Endothelial cell of umbilical vein (primary cell): ENCODE measurements at regions of chr3 and their contacts with region 1.

Region 1: GRCh38 chr3:72818092-72818773 is 30.0 kb downstream of the SHQ1 start:
- DNase-seq: peak; percentile 54
- H3K4me3 ChIP-seq: no peak overlapping the region
- H3K27ac ChIP-seq: no peak overlapping the region
- H3K4me1 ChIP-seq: peaks cover 25% of the 10 kb centered on the region
- H3K27me3 ChIP-seq: no peaks in the 10 kb centered on the region
- CTCF ChIP-seq: peak; percentile 25 to 47
- POLR2A ChIP-seq: no peak

Region 2: DNA sequence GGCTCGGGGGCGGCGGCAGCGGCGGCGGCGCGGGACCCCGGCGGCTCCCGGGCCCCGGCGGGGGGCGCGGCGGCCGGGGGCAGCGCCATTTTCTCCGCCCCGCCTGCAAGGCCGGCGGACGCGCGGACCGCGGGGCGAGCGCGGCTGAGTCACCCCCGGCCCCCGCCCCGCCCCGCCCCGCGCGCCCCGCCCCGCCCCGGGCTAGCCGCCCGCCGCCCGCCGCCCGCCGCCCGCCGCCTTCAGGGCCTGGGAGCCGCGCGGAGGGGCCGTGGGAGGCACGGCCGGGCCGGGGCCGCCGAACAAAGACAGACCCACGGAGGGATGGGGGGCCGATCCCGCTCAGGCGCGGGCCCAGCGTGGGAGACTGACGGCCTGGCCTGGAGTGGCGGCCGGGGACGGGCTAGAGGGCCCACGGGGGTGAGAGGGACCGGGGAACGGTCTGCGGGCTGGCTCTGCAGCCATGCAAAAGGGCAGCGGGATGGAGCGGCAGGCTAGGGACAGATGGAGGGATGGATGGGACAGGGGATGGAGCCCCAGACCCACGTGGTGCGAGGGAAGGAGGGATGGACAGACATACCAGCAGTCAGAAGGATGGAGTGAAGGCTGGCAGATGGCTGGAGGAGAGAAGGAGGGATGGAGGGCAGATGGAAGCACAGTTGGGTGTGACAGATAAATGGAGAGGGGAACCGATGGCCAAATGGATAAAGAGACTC is 1092.8 kb before region 1 on chr3 and contains the start of gene EIF4E3:
- CTCF ChIA-PET with region 1: interaction called, 12 read pairs
- POLR2A ChIA-PET with region 1: no interaction called
- dilution Hi-C with region 1: no loop called
- intact Hi-C with region 1: loop called (anchors 5 kb)
- DNase-seq: no peak
- H3K4me3 ChIP-seq: peak within 1 kb of the TSS; percentile 6 to 54 (median 43)
- H3K27ac ChIP-seq: no peak within 1 kb of the TSS
- H3K4me1 ChIP-seq: peaks cover 5% of the 10 kb centered on the region
- H3K27me3 ChIP-seq: peaks cover 22 to 29% of the 10 kb centered on the region in 2 experiments
- CTCF ChIP-seq: no peak
- POLR2A ChIP-seq: no peak
- total RNA-seq, gene EIF4E3: 4.9 and 7.6 TPM in 2 replicates

Region 3: GRCh38 chr3:71955240-71956068 is 862.8 kb before region 1 on chr3:
- CTCF ChIA-PET with region 1: interaction called, 199 read pairs
- POLR2A ChIA-PET with region 1: no interaction called
- dilution Hi-C with region 1: no loop called
- intact Hi-C with region 1: loop called (anchors 1 kb)
- DNase-seq: peak; percentile 77
- H3K4me3 ChIP-seq: no peak overlapping the region
- H3K27ac ChIP-seq: no peak overlapping the region
- H3K4me1 ChIP-seq: no peaks in the 10 kb centered on the region
- H3K27me3 ChIP-seq: peaks cover 0 to 9% of the 10 kb centered on the region in 2 experiments
- CTCF ChIP-seq: peak; percentile 65 to 77
- POLR2A ChIP-seq: no peak

Region 4: GRCh38 chr3:72310419-72311380 is 507.5 kb before region 1 on chr3:
- CTCF ChIA-PET with region 1: no interaction called
- POLR2A ChIA-PET with region 1: no interaction called
- dilution Hi-C with region 1: no loop called
- intact Hi-C with region 1: loop called (anchors 5 kb)
- DNase-seq: peak; percentile 97
- H3K4me3 ChIP-seq: no peak overlapping the region
- H3K27ac ChIP-seq: peak overlapping the region; percentile 57
- H3K4me1 ChIP-seq: peaks cover 18% of the 10 kb centered on the region
- H3K27me3 ChIP-seq: peaks cover 17 to 20% of the 10 kb centered on the region in 2 experiments
- CTCF ChIP-seq: peak in 1 of 2 donors; percentile 37
- POLR2A ChIP-seq: peak; percentile 49

Region 5: GRCh38 chr3:72482589-72483321 is 335.5 kb before region 1 on chr3:
- CTCF ChIA-PET with region 1: interaction called, 5 read pairs
- POLR2A ChIA-PET with region 1: no interaction called
- dilution Hi-C with region 1: no loop called
- intact Hi-C with region 1: loop called (anchors 10 kb)
- DNase-seq: peak; percentile 87
- H3K4me3 ChIP-seq: peak overlapping the region; percentile 24 to 73 (median 62)
- H3K27ac ChIP-seq: peak overlapping the region; percentile 44
- H3K4me1 ChIP-seq: peaks cover 15% of the 10 kb centered on the region
- H3K27me3 ChIP-seq: no peaks in the 10 kb centered on the region
- CTCF ChIP-seq: no peak
- POLR2A ChIP-seq: no peak

Region 6: GRCh38 chr3:72847751-72848702 is 29.8 kb after region 1 on chr3 and contains the start of gene SHQ1:
- CTCF ChIA-PET with region 1: interaction called, 11 read pairs
- POLR2A ChIA-PET with region 1: no interaction called
- dilution Hi-C with region 1: no loop called
- intact Hi-C with region 1: no loop called
- DNase-seq: peak; percentile 93
- H3K4me3 ChIP-seq: peak within 1 kb of the TSS; percentile 46 to 77 (median 76)
- H3K27ac ChIP-seq: peak within 1 kb of the TSS; percentile 4
- H3K4me1 ChIP-seq: peaks cover 16% of the 10 kb centered on the region
- H3K27me3 ChIP-seq: no peaks in the 10 kb centered on the region
- CTCF ChIP-seq: no peak
- POLR2A ChIP-seq: peak; percentile 67
- total RNA-seq, gene SHQ1: 19.7 and 20.6 TPM in 2 replicates

Region 7: DNA sequence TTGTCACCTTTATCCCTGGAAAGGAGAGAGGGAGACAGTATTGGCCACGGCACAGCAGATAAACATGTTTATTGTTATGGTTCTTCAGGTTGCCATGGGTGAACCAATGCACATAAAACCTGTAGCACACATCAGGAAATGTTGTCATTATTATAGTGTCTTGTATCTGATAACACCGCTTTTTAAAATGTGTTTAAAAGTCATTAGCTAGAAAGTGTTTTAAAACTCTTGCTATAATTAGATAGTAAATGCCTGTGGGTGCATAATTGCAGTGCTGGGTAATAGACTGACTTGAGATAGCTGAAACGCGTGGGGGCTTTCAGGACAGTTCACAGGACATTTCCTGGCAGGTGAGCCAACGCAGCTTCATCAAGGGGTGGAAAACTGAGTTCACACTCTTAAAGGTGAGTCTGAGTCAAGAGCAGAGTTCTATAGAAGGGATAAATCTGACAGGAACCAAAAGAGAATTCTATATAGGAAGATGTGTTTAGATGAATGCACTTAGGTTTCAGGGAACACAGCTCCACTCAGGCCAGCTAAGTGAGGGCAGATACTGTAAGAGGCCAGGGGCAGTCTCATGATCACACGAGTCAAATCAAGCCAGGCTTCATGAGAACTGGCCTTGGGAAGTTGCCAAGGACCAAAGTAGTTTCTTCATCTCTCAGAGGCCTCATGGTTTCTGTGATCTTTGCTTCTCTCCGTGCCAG is 142.7 kb after region 1 on chr3:
- CTCF ChIA-PET with region 1: no interaction called
- POLR2A ChIA-PET with region 1: no interaction called
- dilution Hi-C with region 1: no loop called
- intact Hi-C with region 1: no loop called
- DNase-seq: no peak
- H3K4me3 ChIP-seq: no peak overlapping the region
- H3K27ac ChIP-seq: no peak overlapping the region
- H3K4me1 ChIP-seq: no peaks in the 10 kb centered on the region
- H3K27me3 ChIP-seq: peaks cover 0 to 2% of the 10 kb centered on the region in 2 experiments
- CTCF ChIP-seq: no peak
- POLR2A ChIP-seq: no peak